ENCODE measurements at regions of chr15 and their contacts with region 1.

Region 1: DNA sequence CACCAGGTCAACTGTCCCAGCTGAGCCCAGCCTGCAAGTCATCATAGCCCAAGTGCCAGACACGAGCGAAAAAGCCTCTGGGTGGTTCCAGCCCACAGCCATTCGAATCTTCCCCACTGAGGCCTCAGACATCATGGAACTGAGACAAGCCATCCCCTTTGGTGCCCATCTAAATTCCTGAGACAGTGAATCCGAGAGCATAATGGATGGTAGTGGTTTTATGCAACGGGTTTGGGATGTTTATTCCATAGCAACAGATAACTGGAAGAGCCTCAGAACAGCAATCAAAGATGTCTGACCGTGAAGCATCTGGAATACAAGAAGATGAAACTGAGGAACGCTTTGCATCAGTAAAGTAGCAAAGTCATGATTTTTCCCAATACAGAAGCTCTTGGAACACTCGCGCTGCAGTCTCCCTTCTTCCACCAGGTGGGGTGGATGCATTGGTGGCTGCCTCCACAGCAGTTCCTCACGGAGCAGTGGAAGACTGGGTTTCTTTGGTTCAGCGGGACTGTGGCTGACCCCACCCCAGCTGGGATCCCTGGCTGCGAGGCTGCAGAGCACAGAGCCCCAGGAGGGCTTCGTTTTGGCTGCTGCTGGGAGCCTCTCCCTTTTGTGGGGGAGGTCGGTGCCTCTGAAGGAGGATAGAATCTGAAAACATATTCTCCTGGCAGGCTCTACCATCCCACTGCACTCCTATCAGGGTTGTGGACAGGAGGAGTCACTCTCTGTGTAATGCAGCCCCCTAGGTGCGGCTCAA is 26.4 kb upstream of the PDE8A start:
- DNase-seq: no peak
- H3K4me3 ChIP-seq: peak overlapping the region in 3 of 4 donors; percentile 15 to 57 (median 15)
- H3K27ac ChIP-seq: no peak overlapping the region
- H3K4me1 ChIP-seq: peaks cover 0 to 8% (median 4%) of the 10 kb centered on the region in 3 donors
- H3K27me3 ChIP-seq: no peaks in the 10 kb centered on the region
- CTCF ChIP-seq: peak; percentile 65 to 86 (median 81)
- POLR2A ChIP-seq: no peak

Region 2: DNA sequence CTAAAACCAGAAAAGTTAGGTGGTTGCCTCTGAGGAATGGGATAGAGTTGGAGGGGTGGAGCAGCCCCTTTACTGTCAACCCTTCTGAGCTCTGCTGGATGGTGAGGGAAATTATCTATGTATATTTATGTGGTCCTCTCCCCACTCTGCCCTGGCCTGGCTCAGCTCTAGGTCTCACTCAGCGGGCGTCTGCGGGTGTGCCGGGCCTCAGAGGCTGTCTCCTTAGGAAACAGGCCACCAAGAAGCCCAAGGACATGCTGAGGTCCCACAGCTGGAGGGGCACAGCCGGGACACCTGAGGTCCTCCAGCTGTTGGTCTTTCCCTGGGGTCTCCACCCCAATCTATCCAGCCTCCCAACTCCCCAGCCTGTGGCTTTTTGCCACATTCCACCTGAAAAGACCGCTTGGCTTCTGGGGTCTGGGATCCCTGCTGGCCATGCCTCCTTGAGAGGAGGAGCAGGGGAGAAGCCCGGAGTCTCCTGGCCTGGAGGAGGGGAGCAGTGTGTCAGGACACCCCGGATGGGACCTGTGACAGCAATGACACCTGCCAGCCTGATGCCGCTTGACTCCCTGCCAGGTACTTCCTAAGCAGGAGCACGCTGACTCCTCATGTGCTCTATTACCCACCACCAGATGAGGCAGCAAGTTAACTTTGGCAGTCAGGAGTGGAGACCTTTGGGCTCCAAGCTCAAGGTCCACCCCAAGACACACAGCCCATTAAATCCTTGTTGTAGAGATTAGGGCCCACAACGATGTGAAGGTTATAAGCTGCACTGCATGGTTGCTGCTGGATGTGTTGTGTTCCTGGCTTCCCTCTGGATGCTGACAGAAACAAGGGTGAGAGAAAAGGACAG is 71.1 kb before region 1 on chr15 and contains the start of gene SLC28A1:
- intact Hi-C with region 1: no loop called
- DNase-seq: no peak
- H3K4me3 ChIP-seq: no peak within 1 kb of the TSS
- H3K27ac ChIP-seq: no peak within 1 kb of the TSS
- H3K4me1 ChIP-seq: no peaks in the 10 kb centered on the region
- H3K27me3 ChIP-seq: peaks cover 0 to 15% (median 0%) of the 10 kb centered on the region in 4 donors
- CTCF ChIP-seq: no peak
- POLR2A ChIP-seq: no peak
- total RNA-seq, gene SLC28A1: not detected

Region 3: GRCh38 chr15:85044251-85044853 is 89.1 kb after region 1 on chr15:
- intact Hi-C with region 1: loop called (anchors 5 kb)
- DNase-seq: no peak
- H3K4me3 ChIP-seq: no peak overlapping the region
- H3K27ac ChIP-seq: no peak overlapping the region
- H3K4me1 ChIP-seq: peaks cover 0 to 30% (median 0%) of the 10 kb centered on the region in 3 donors
- H3K27me3 ChIP-seq: no peaks in the 10 kb centered on the region
- CTCF ChIP-seq: peak; percentile 34 to 61 (median 54)
- POLR2A ChIP-seq: no peak

Region 4: GRCh38 chr15:85116925-85117680 is 161.8 kb after region 1 on chr15:
- intact Hi-C with region 1: no loop called
- DNase-seq: no peak
- H3K4me3 ChIP-seq: no peak overlapping the region
- H3K27ac ChIP-seq: no peak overlapping the region
- H3K4me1 ChIP-seq: no peaks in the 10 kb centered on the region
- H3K27me3 ChIP-seq: no peaks in the 10 kb centered on the region
- CTCF ChIP-seq: no peak
- POLR2A ChIP-seq: no peak

Measured in esophagus squamous epithelium (tissue), 5 donors.